ENCODE measurements at regions of chr2 and their contacts with region 1.

Region 1: GRCh38 chr2:174341286-174341994 is 6.7 kb downstream of the SP9 start:
- DNase-seq: peak; percentile 83 to 92
- H3K4me3 ChIP-seq: peak overlapping the region; percentile 49
- H3K4me3 Mint-ChIP-seq: peak overlapping the region; percentile 93
- H3K27ac Mint-ChIP-seq: no peak overlapping the region
- H3K4me1 ChIP-seq: no peaks in the 10 kb centered on the region
- H3K4me1 Mint-ChIP-seq: peaks cover 6% of the 10 kb centered on the region
- H3K27me3 ChIP-seq: no peaks in the 10 kb centered on the region; the same call in 1 of the 2 replicates
- H3K27me3 Mint-ChIP-seq: peaks cover 9% of the 10 kb centered on the region
- CTCF ChIP-seq: peak; percentile 97 to 98

Region 2: DNA sequence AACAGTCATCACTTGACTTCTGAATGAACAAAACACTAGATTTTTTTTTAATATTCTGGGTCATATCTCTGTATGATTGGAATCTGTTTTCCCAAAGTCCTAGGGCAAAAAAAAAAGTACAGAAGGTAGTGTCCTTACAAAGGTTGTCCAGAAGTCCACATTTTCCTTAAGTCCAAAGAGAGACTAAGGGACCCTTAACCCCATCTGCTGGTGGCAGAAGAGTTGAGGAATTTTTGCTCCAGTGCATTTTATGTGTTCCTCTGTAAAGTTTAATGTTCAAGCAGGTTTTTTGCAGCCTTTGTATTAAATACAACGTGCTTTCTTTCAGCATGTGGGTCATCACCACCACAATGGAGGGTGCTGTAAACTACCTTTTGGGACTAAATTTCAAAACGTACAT is 592.1 kb before region 1 on chr2:
- CTCF ChIA-PET with region 1: interaction called, 4 read pairs
- POLR2A ChIA-PET with region 1: no interaction called
- intact Hi-C with region 1: loop called (anchors 5 kb)
- DNase-seq: peak in 1 of 2 experiments; percentile 38
- H3K4me3 ChIP-seq: no peak overlapping the region
- H3K4me3 Mint-ChIP-seq: no peak overlapping the region
- H3K27ac Mint-ChIP-seq: no peak overlapping the region
- H3K4me1 ChIP-seq: no peaks in the 10 kb centered on the region
- H3K4me1 Mint-ChIP-seq: peaks cover 5% of the 10 kb centered on the region
- H3K27me3 ChIP-seq: no peaks in the 10 kb centered on the region
- H3K27me3 Mint-ChIP-seq: peaks cover under 1% of the 10 kb centered on the region
- CTCF ChIP-seq: peak; percentile 52 to 62

Region 3: DNA sequence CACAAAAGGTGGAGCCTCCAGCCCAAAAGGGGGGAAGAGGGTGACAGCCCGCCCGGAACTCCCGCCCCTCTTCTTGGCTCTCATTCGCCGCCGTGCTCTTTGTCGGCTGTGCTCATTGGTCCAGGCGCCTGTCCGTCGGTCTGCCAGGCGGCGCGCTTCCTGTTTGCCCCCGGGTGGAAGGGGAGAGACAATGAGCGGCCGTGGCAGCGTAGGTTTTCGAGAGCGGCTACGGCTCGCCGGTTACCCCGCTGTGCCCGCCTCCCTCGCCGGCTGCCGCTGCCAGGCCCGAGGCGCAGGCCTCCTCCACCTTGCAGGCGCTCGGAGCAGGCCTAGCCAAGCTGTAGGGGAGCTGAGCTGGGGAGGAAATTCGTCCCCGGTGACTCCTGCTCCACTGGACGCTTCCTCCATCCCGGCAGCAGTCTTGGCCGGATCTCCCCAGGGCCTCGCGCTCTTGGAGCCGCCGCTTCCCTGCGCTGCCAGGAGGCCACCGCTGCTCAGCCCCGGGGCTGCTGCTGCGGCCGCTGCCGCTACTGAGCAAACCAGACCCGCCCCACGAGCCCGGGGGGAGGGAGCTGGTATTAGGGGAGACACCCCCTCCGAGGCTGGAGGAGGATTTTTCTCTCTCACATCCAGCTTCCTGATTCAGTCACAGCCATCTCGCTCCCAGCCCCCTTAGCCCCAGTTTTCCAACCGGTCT is 376.0 kb before region 1 on chr2 and contains the start of gene SP3:
- CTCF ChIA-PET with region 1: interaction called, 4 read pairs
- POLR2A ChIA-PET with region 1: no interaction called
- intact Hi-C with region 1: loop called (anchors 5 kb)
- DNase-seq: peak; percentile 97 to 98
- H3K4me3 ChIP-seq: peak within 1 kb of the TSS; percentile 98
- H3K4me3 Mint-ChIP-seq: peak within 1 kb of the TSS; percentile 98
- H3K27ac Mint-ChIP-seq: peak within 1 kb of the TSS; percentile 91
- H3K4me1 ChIP-seq: peaks cover 45% of the 10 kb centered on the region
- H3K4me1 Mint-ChIP-seq: peaks cover 39% of the 10 kb centered on the region
- H3K27me3 ChIP-seq: no peaks in the 10 kb centered on the region
- H3K27me3 Mint-ChIP-seq: no peaks in the 10 kb centered on the region
- CTCF ChIP-seq: no peak
- total RNA-seq, gene SP3: 108 and 111 TPM in 2 replicates

Region 4: GRCh38 chr2:174138161-174138560 is 203.3 kb before region 1 on chr2:
- CTCF ChIA-PET with region 1: no interaction called
- POLR2A ChIA-PET with region 1: no interaction called
- intact Hi-C with region 1: loop called (anchors 1 kb)
- DNase-seq: peak in 1 of 2 experiments; percentile 28
- H3K4me3 ChIP-seq: no peak overlapping the region
- H3K4me3 Mint-ChIP-seq: no peak overlapping the region
- H3K27ac Mint-ChIP-seq: no peak overlapping the region
- H3K4me1 ChIP-seq: no peaks in the 10 kb centered on the region
- H3K4me1 Mint-ChIP-seq: peaks cover 7% of the 10 kb centered on the region
- H3K27me3 ChIP-seq: no peaks in the 10 kb centered on the region
- H3K27me3 Mint-ChIP-seq: no peaks in the 10 kb centered on the region
- CTCF ChIP-seq: peak; percentile 34 to 53

Region 5: GRCh38 chr2:174248187-174248997 is 93.0 kb before region 1 on chr2 and contains the start of gene OLA1:
- CTCF ChIA-PET with region 1: interaction called, 9 read pairs
- POLR2A ChIA-PET with region 1: interaction called, 18 read pairs
- intact Hi-C with region 1: loop called (anchors 1 kb)
- DNase-seq: peak; percentile 96 to 99
- H3K4me3 ChIP-seq: peak within 1 kb of the TSS; percentile 88
- H3K4me3 Mint-ChIP-seq: peak within 1 kb of the TSS; percentile 92
- H3K27ac Mint-ChIP-seq: peak within 1 kb of the TSS; percentile 85
- H3K4me1 ChIP-seq: peaks cover 10% of the 10 kb centered on the region; the same call in 1 of the 2 replicates
- H3K4me1 Mint-ChIP-seq: peaks cover 12% of the 10 kb centered on the region
- H3K27me3 ChIP-seq: no peaks in the 10 kb centered on the region
- H3K27me3 Mint-ChIP-seq: no peaks in the 10 kb centered on the region
- CTCF ChIP-seq: no peak
- total RNA-seq, gene OLA1: 177 and 182 TPM in 2 replicates

Region 6: GRCh38 chr2:174365571-174365970 is 24.1 kb after region 1 on chr2:
- CTCF ChIA-PET with region 1: no interaction called
- POLR2A ChIA-PET with region 1: no interaction called
- intact Hi-C with region 1: no loop called
- DNase-seq: no peak
- H3K4me3 ChIP-seq: no peak overlapping the region
- H3K4me3 Mint-ChIP-seq: no peak overlapping the region
- H3K27ac Mint-ChIP-seq: no peak overlapping the region
- H3K4me1 ChIP-seq: no peaks in the 10 kb centered on the region
- H3K4me1 Mint-ChIP-seq: no peaks in the 10 kb centered on the region
- H3K27me3 ChIP-seq: no peaks in the 10 kb centered on the region
- H3K27me3 Mint-ChIP-seq: no peaks in the 10 kb centered on the region
- CTCF ChIP-seq: no peak

Region 7: GRCh38 chr2:174546581-174547506 is 205.4 kb after region 1 on chr2:
- CTCF ChIA-PET with region 1: interaction called, 15 read pairs
- POLR2A ChIA-PET with region 1: no interaction called
- intact Hi-C with region 1: loop called (anchors 5 kb)
- DNase-seq: peak; percentile 84 to 88
- H3K4me3 ChIP-seq: peak overlapping the region; percentile 54
- H3K4me3 Mint-ChIP-seq: peak overlapping the region; percentile 96
- H3K27ac Mint-ChIP-seq: peak overlapping the region; percentile 98
- H3K4me1 ChIP-seq: peaks cover 22% of the 10 kb centered on the region
- H3K4me1 Mint-ChIP-seq: peaks cover 7% of the 10 kb centered on the region
- H3K27me3 ChIP-seq: no peaks in the 10 kb centered on the region
- H3K27me3 Mint-ChIP-seq: no peaks in the 10 kb centered on the region
- CTCF ChIP-seq: peak; percentile 70 to 85

Measured in Caco-2 (cell line).